ENCODE measurements at regions of chr11 and their contacts with region 1.

Region 1: GRCh38 chr11:92941676-92942571 is 27.5 kb upstream of the MTNR1B start:
- DNase-seq: no peak
- ATAC-seq: no peak

Region 2: GRCh38 chr11:92383430-92383829 is 558.5 kb before region 1 on chr11:
- intact Hi-C with region 1: no loop called
- DNase-seq: no peak
- ATAC-seq: no peak

Region 3: GRCh38 chr11:92978271-92979111 is 36.6 kb after region 1 on chr11:
- intact Hi-C with region 1: no loop called
- DNase-seq: no peak
- ATAC-seq: no peak

Region 4: DNA sequence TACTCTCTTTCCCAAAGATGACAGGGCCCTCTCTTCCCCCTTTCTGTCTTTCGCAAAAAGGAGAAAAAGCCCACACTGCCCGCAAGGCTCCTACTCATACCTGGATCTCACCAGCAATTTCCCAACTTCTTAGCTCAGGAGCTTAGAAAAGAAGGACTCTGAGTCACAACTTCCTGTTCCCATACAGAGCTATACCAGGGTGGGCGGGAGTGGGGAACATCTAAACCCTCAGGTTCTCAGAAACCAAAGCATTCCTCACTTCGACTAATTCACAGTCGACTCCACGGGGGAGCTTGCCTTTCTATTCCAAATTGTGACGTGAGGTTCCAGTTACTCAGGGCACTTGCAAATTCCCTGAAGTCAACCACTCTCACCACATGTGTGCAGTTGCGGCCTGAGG is 89.5 kb after region 1 on chr11:
- intact Hi-C with region 1: no loop called
- DNase-seq: no peak
- ATAC-seq: no peak

Region 5: DNA sequence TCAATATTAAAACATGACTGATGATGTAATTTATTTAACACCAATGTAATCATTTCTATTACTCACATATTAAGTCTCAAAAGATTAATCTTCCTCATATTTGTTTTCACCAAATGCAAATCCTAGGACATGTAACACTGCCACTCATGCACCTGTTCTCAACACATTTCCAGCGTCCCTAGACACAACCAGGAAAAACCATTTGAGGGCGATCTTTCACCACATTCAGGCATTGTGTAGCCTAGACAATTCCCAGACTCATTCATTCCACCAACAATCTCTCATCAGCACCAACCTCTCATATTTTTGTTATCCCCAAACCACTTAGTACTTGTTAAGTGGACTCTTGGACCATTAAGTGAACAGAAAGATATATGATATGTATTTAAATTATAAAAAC is 189.8 kb after region 1 on chr11:
- intact Hi-C with region 1: no loop called
- DNase-seq: no peak
- ATAC-seq: no peak

Region 6: GRCh38 chr11:93225662-93226061 is 283.7 kb after region 1 on chr11:
- intact Hi-C with region 1: loop called (anchors 5 kb)
- DNase-seq: no peak
- ATAC-seq: no peak

Measured in left ventricle myocardium superior (tissue), 1 donor.